SK-N-SH (cell line): ENCODE measurements at regions of chr17 and their contacts with region 1.

Region 1: DNA sequence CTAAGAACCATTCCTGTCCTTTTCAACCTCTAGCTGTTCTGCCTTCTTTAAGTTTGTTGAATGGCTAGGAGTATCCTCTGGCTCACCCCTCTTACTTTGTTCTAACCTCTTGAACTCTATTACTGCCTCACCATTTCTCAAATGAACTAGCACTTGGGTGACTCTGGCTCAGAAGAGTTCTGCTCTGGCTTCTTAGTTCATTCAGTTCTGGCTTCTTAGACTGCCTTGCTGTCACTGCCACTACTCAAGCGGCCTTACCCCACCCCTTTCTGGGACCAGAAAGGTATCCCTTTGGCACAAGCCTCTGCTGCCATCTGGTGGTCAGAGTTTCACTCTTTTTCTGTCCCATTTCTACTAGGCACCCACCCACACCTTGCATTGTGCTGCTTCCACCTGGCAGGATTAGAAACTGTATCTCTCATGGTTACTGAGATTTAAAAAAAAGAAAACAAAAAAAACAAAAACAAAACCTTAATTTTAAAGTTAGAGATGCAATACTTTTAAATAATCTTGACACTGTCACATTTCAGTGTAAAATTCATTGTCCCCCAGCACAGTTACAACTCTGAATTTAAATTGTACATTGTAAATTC is 6.8 kb upstream of the ABCA10 start:
- DNase-seq: peak; percentile 61
- H3K4me3 ChIP-seq: no peak overlapping the region; a peak in 1 of 4 replicates
- H3K27ac ChIP-seq: no peak overlapping the region
- H3K4me1 ChIP-seq: no peaks in the 10 kb centered on the region
- H3K27me3 ChIP-seq: no peaks in the 10 kb centered on the region
- CTCF ChIP-seq: peak; percentile 98
- EP300 ChIP-seq: no peak
- RAD21 ChIP-seq: peak; percentile 97

Region 2: DNA sequence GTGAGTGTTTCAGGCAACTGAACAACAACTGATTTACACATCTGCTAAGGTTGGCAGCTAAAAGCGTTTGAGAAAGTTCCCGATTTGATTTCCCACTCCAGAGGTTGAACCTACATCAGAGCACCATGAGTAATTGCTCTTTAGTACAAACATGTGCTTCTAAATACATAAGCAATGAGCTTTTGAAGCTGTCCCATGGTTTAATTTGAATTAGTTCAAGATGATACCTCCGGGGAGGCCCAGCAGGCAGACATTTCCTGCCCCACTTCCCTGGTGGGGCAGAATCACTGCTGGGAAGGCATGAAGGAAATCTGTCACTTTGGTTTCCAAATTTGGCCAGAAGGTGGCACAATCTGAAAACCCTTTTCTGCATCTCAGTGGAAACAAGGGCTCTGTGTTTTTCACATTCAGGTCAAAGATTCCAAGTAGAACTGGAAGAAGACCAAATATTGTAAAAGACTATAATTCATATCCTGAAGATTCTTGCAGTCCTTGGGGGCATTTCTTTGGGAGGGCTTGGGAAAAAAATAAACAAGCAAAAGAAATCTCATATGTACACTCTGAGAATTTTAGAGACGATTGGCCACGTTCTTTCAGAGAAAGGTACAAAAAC is 458.1 kb before region 1 on chr17:
- CTCF ChIA-PET with region 1: interaction called, 185 read pairs
- POLR2A ChIA-PET with region 1: no interaction called
- DNase-seq: peak; percentile 48
- H3K4me3 ChIP-seq: no peak overlapping the region; a peak in 1 of 4 replicates
- H3K27ac ChIP-seq: no peak overlapping the region
- H3K4me1 ChIP-seq: peaks cover 2 to 15% of the 10 kb centered on the region in 2 experiments
- H3K27me3 ChIP-seq: no peaks in the 10 kb centered on the region; the same call in 1 of the 2 replicates
- CTCF ChIP-seq: peak; percentile 90
- EP300 ChIP-seq: no peak
- RAD21 ChIP-seq: peak; percentile 83

Region 3: GRCh38 chr17:69223809-69224208 is 11.6 kb before region 1 on chr17:
- CTCF ChIA-PET with region 1: interaction called, 11 read pairs
- POLR2A ChIA-PET with region 1: no interaction called
- DNase-seq: no peak
- H3K4me3 ChIP-seq: no peak overlapping the region
- H3K27ac ChIP-seq: no peak overlapping the region
- H3K4me1 ChIP-seq: no peaks in the 10 kb centered on the region
- H3K27me3 ChIP-seq: no peaks in the 10 kb centered on the region; the same call in 1 of the 2 replicates
- CTCF ChIP-seq: no peak
- EP300 ChIP-seq: no peak
- RAD21 ChIP-seq: no peak

Region 4: DNA sequence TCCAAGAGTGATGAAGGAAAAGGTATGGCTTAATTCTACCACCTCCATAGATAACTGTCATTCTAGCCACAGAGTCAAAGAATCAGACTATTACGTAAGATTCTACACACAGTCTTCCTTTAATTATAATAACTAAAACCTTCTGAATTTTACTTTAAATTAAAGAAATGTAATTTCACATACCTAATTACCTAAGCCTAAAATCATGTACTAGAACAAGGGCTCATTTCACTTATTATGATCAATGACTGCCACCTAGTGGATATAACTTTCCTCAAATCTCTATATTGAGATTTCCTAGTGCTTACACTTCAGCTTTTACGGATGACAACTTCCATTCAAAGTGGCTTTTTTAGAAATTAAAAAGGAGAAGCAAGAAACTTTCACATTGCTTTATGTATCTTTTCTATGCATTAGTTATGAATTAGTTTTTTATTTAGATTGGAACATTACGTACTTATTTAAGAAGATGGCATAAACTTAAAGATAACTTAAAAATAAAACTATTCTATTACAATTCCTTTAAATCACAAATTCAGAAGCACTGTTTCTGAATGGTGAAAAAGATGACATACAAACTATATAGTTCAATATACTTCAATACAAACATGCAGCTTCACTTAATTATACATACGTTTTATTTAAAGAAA is 11.4 kb after region 1 on chr17:
- CTCF ChIA-PET with region 1: interaction called, 63 read pairs
- POLR2A ChIA-PET with region 1: no interaction called
- DNase-seq: peak; percentile 39
- H3K4me3 ChIP-seq: no peak overlapping the region; a peak in 1 of 4 replicates
- H3K27ac ChIP-seq: no peak overlapping the region
- H3K4me1 ChIP-seq: peaks cover 0 to 4% of the 10 kb centered on the region in 2 experiments; a peak in 1 of 4 replicates
- H3K27me3 ChIP-seq: no peaks in the 10 kb centered on the region
- CTCF ChIP-seq: peak; percentile 95
- EP300 ChIP-seq: no peak
- RAD21 ChIP-seq: peak; percentile 80